CD8-positive, alpha-beta T cell (primary cell): ENCODE measurements at regions of chrX and their contacts with region 1.

Region 1: DNA sequence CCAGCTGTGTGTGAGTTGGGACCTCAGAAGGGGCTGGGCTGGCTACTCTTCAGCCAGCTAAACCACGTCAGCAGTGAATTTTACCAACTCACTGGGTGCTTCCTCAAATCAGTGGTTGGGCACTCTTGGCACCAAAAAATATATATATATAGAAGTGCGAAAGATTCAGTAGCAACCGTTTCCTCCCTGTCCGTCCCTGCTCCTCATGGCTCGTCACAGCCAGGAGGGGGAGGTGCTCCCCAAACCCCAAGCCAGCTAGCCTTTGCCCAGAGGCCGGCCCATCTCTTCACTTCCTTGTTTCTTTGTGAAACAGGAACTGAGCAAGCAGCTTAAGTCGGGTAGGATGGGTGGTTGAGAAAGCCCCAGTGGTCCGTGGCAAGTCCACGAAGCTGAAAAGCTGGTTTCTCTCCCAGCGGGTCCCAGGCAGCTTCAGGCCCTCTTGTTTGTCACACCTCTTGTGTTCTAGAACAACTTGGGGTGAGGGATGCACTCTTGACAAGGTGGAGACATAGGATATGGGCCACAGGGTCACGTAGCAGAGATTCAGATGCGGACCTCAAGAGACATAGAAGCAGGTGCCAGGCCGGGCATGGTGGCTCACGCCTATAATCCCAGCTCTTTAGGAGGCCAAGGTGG is 6.8 kb upstream of the SASH3 start:
- DNase-seq: peak in 5 of 9 experiments; percentile 39 to 83 (median 54)
- ATAC-seq: no peak
- H3K4me3 ChIP-seq: no peak overlapping the region
- H3K4me3 Mint-ChIP-seq: peak overlapping the region; percentile 54
- H3K27ac ChIP-seq: peak overlapping the region in 1 of 2 experiments; percentile 75
- H3K27ac Mint-ChIP-seq: peak overlapping the region; percentile 95
- H3K4me1 ChIP-seq: peaks cover 85% of the 10 kb centered on the region
- H3K4me1 Mint-ChIP-seq: peaks cover 77% of the 10 kb centered on the region
- H3K27me3 ChIP-seq: no peaks in the 10 kb centered on the region
- H3K27me3 Mint-ChIP-seq: no peaks in the 10 kb centered on the region
- CTCF ChIP-seq: no peak

Region 2: DNA sequence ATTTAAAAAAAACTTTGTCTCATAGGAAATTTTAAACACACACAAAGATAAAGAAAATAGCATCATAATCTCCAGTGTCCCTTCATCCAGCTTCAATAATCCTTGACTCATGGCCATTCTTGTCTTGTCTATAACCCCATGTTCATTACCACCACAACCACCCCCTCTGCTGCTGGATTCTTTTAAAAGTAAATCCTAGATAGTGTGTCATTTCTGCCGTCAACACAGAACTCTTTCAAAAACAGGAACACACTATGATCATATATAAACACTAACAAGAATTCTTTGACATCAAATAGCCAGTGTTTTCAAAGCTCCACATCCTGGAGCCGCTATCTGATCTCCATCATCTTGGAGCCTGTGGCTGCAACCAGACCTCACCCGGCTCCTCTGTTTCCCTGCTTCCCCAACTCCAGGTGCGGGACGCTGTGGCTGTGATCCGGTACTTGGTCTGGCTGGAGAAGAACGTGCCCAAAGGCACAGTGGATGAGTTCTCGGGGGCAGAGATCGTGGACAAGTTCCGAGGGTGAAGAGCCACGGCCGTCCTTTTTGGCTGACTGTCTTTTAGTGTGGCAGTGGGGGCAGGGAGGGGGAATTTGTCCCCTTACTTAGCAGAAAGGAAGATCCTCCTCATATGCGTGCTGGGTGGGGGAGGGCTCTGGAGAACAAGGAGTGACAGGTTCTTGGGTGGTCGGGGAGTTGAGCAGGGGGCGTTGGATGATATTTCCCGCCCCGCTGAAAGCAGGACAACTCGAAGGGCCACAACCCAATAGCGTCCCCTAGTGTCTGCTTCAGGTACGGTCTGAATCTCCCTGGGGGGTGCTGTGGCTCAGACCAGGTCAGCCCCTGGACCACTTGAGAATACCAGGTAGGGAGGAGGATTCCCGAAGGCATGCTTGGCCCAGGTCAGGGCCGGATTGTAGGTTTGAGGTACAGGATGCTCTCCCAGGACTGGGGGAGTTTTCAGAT is 18.6 kb before region 1 on chrX:
- CTCF ChIA-PET with region 1: interaction called, 5 read pairs
- POLR2A ChIA-PET with region 1: interaction called, 23 read pairs
- intact Hi-C with region 1: loop called in 1 of 2 experiments (anchors 1 kb)
- DNase-seq: peak in 1 of 9 experiments; percentile 22
- ATAC-seq: no peak
- H3K4me3 ChIP-seq: no peak overlapping the region
- H3K4me3 Mint-ChIP-seq: no peak overlapping the region
- H3K27ac ChIP-seq: no peak overlapping the region
- H3K27ac Mint-ChIP-seq: peak overlapping the region; percentile 69
- H3K4me1 ChIP-seq: peaks cover 47% of the 10 kb centered on the region
- H3K4me1 Mint-ChIP-seq: peaks cover 50% of the 10 kb centered on the region
- H3K27me3 ChIP-seq: no peaks in the 10 kb centered on the region
- H3K27me3 Mint-ChIP-seq: no peaks in the 10 kb centered on the region
- CTCF ChIP-seq: no peak